ENCODE measurements at regions of chr9 and their contacts with region 1.

Region 1: DNA sequence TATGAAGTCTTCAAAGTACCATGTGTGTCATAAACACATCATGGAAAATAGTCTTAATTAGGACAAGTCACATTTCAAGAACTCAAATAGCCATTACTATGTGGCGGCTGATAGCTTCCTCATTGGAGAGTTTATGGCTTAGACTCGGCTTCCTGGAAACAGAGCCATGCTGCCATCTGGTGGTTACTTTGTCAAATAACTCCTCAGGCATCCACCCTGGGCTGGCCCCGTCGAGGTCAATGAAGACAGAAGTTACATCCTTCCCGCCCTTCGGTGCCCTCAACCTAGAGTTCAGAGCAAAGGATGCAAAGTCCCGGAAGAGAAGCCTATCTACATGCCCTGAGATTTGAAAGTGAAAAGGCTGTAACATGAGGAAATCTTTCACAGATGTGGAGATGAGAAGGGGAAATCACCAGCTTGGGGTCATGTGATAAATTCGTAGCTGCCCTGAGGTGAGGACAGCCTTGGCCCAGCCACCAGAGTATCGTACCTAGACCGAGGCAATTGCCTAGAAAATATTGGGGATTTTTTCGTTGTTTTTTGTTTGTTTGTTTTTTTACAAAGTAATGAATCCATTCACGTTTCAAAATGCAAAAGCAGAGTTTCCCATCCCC is 45.5 kb upstream of the ZNF169 start:
- DNase-seq: peak; percentile 79
- H3K4me3 ChIP-seq: no peak overlapping the region
- H3K27ac ChIP-seq: no peak overlapping the region
- H3K4me1 ChIP-seq: no peaks in the 10 kb centered on the region
- H3K27me3 ChIP-seq: no peaks in the 10 kb centered on the region
- CTCF ChIP-seq: peak; percentile 77

Region 2: DNA sequence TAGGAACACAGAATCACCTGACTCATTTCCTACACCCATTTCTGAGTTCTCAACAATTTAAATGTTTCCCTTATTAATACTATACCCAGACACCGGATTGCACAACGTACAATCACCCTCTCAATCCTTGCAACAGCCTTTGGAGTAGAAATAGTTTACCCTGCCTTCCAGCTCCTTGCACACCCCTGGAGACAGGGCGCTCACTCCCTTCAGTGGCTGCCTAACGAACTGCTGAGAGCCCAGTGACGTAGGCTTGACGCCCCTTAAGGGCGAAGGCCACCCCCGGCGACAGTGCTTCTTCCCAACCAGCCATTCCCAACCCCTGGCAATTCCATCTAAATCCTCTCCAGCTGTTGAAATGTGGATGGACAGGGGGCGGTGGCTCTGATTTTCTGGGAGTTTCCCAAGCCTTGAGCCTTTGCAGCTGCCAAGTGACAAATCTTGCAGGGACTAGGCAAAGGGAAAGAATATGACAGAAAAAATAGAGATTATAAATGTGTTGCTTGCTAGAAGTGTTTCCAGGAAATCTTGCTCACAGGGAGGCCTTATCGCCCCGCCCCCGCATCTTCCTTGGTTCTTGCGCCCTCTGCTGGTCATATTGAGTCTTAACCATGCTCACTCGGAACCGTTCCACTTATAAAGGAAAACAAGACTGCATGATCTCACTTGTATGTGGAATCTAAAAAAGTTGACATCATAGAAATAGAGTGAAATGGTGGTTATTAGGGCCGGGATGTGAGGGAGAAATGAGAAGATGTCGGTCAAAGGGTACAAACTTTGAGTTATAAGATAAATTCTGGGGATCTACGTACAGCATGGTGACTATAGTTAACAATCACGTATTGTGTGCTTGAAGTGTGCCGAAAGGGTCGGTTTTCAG is 250.8 kb before region 1 on chr9:
- intact Hi-C with region 1: no loop called
- DNase-seq: peak; percentile 88
- H3K4me3 ChIP-seq: no peak overlapping the region
- H3K27ac ChIP-seq: no peak overlapping the region
- H3K4me1 ChIP-seq: peaks cover 22% of the 10 kb centered on the region
- H3K27me3 ChIP-seq: peaks cover 40% of the 10 kb centered on the region
- CTCF ChIP-seq: peak; percentile 68

Region 3: GRCh38 chr9:94014065-94014654 is 199.5 kb before region 1 on chr9:
- intact Hi-C with region 1: loop called (anchors 5 kb)
- DNase-seq: no peak
- H3K4me3 ChIP-seq: no peak overlapping the region
- H3K27ac ChIP-seq: no peak overlapping the region
- H3K4me1 ChIP-seq: no peaks in the 10 kb centered on the region
- H3K27me3 ChIP-seq: no peaks in the 10 kb centered on the region
- CTCF ChIP-seq: peak; percentile 41

Region 4: DNA sequence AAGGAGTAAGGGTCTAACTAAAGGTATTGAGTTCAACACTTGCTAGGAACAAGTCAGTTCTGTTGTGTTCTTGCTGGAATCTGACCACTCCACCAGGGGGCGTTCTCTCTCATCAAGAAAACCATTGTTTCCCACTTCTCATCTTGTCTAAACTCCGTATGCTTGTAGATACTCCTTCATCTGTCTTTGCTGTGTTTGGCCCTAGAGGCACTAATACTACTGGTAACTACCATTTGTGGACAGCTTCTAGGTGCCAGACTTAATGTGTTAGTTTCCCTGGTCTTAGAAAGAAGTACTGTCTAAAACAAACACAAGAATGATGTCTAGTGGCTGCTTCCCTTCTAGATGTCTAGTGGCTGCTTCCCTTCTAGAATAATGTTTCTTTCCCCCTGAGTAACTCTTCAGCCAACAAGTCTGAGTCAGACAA is 148.1 kb before region 1 on chr9:
- intact Hi-C with region 1: loop called (anchors 1 kb)
- DNase-seq: peak; percentile 83
- H3K4me3 ChIP-seq: no peak overlapping the region
- H3K27ac ChIP-seq: no peak overlapping the region
- H3K4me1 ChIP-seq: no peaks in the 10 kb centered on the region
- H3K27me3 ChIP-seq: no peaks in the 10 kb centered on the region
- CTCF ChIP-seq: peak; percentile 86

Region 5: DNA sequence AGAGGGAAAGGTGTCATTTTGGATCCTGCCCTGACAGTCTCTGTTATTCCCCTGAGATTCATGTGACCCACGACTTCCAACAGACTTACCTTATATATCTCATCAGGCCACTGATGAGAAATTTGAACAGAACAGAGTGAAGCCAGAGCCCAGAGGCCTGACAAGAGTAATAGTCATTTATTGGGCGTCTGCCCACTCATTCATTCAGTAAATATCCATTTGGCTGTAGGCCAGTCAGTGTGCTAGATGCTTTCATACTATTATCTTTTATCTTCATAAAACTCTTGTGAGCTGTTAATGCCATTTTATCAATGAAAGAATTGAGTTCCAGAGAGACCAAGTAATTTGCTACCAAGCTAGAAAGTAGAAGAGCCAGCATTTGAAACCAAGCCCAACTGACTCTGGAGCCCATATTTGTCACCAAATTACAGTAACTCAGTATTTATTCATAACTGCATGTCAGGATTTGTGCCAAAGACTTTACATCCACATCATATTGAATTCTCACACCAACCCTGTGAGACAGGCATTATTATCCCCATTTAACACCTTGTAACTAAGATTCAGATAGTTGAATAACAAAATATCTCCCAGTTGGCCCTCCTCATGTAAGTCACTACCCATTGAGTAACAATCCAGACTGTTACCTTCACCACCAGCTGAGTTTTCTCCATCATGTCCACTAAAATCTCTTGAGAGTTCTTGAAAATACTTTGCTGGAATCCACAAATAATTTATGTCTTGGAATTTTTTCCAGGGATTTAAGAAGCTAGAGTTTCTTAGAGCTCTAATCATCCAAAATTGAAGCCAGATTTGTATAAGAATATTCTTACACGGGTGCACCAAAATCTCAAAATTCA is 126.9 kb before region 1 on chr9:
- intact Hi-C with region 1: no loop called
- DNase-seq: no peak
- H3K4me3 ChIP-seq: no peak overlapping the region
- H3K27ac ChIP-seq: no peak overlapping the region
- H3K4me1 ChIP-seq: no peaks in the 10 kb centered on the region
- H3K27me3 ChIP-seq: no peaks in the 10 kb centered on the region
- CTCF ChIP-seq: no peak